OCI-LY7 (cell line): ENCODE measurements at regions of chr15 and their contacts with region 1.

Region 1: GRCh38 chr15:67080900-67081431 is 15.6 kb downstream of the SMAD3 start:
- DNase-seq: peak; percentile 98
- H3K4me3 ChIP-seq: peak overlapping the region; percentile 54
- H3K27ac ChIP-seq: peak overlapping the region; percentile 99
- H3K4me1 ChIP-seq: peaks cover 97% of the 10 kb centered on the region
- CTCF ChIP-seq: peak; percentile 82

Region 2: DNA sequence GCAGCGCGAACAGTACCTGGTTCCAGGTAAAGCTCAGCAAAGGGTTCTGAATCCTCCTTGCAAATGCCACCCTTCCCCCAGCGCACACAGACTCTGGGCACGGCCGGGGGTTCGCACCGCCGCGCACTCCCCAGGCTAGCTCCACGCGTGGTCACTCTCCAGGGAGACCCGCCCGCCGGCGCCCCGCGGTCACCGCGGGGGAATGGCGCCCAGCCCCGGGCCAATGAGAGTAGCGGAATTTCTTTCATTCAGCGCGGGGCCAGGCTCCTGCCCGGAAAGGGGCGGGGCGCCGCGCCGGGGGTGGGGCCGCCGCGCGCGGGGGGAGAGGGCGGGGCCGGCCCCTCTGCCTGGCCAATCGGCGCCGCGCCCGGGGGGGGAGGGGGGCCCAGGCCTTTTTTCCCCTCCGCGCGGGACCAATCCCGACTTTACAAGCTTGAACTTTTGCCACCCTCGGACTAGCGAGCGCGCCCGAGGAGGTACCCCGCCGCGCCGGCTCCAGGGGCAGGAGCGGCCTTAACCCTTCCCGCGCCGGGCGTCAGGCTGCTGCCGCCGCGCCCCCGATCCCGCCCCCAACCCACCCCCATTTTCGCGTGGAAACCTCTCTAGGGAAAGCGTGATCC is 380.1 kb before region 1 on chr15:
- CTCF ChIA-PET with region 1: no interaction called
- POLR2A ChIA-PET with region 1: interaction called, 5 read pairs
- intact Hi-C with region 1: loop called (anchors 10 kb)
- DNase-seq: peak; percentile 96
- H3K4me3 ChIP-seq: peak overlapping the region; percentile 77
- H3K27ac ChIP-seq: peak overlapping the region; percentile 84
- H3K4me1 ChIP-seq: peaks cover 38% of the 10 kb centered on the region
- CTCF ChIP-seq: no peak

Region 3: GRCh38 chr15:67065444-67066093 is 15.4 kb before region 1 on chr15 and contains the start of gene SMAD3:
- CTCF ChIA-PET with region 1: interaction called, 3 read pairs
- POLR2A ChIA-PET with region 1: interaction called, 7 read pairs
- intact Hi-C with region 1: loop called (anchors 1 kb)
- DNase-seq: peak; percentile 92
- H3K4me3 ChIP-seq: peak within 1 kb of the TSS; percentile 100
- H3K27ac ChIP-seq: peak within 1 kb of the TSS; percentile 76
- H3K4me1 ChIP-seq: peaks cover 32% of the 10 kb centered on the region
- CTCF ChIP-seq: no peak
- total RNA-seq, gene SMAD3: 32.8 and 41.2 TPM in 2 replicates

Region 4: GRCh38 chr15:67101911-67102598 is 21.1 kb after region 1 on chr15:
- CTCF ChIA-PET with region 1: interaction called, 10 read pairs
- POLR2A ChIA-PET with region 1: interaction called, 80 read pairs
- intact Hi-C with region 1: loop called (anchors 1 kb)
- DNase-seq: no peak
- H3K4me3 ChIP-seq: peak overlapping the region; percentile 62
- H3K27ac ChIP-seq: peak overlapping the region; percentile 98
- H3K4me1 ChIP-seq: peaks cover 99% of the 10 kb centered on the region
- CTCF ChIP-seq: no peak

Region 5: DNA sequence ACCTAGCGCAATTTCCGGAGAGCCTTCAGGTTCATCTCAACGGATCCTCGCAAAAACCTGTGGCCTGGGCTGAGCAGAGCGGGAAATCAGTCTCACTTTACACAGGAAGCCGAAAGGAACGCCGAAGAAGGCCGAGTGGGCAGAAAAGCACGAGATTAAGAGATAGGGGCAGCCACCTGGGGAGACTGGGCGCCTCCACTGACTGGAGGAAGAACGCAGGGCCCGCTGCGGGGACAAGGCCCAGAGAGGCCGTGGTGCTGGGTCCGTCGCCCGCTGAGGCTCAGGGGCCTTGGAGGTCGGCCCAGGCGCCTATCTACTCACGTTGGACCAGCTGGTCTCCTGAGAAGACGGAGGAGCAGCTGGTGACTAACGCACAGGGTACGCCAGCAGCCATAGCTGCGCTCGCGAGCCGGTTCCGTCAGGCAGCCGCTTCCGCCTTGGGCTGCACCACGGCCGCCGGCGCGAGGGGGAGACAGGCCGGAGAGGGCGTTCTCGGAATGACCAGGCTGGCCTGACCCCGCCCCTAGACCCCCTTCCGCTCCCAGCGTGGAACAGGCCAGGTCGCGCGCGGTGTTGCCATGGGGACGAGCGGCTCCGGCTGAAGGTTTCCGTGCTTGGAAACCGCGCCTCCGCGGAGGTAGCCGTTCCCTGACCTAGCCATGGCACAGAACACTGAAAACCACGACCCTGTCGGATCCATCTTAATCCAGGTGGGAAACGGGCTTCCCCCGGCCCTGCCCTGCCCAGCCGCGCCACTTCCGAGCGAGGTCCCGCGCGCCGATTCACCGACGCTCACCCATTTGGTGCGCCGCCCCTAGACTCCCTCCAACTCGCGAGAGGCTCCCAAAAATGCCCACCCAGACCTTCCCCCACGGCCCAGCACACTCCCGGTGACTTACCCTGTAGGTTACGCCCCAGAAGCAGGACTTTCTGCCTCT is 173.5 kb after region 1 on chr15 and contains the starts of genes AAGAB and IQCH:
- CTCF ChIA-PET with region 1: no interaction called
- POLR2A ChIA-PET with region 1: no interaction called
- intact Hi-C with region 1: loop called (anchors 5 kb)
- DNase-seq: peak; percentile 96
- H3K4me3 ChIP-seq: peak within 1 kb of the TSS; percentile 91
- H3K27ac ChIP-seq: peak within 1 kb of the TSS; percentile 69
- H3K4me1 ChIP-seq: peaks cover 14% of the 10 kb centered on the region
- CTCF ChIP-seq: no peak
- total RNA-seq, gene AAGAB: 31.0 and 36.2 TPM in 2 replicates
- total RNA-seq, gene IQCH: 3.9 and 6.8 TPM in 2 replicates